ENCODE measurements at regions of chr17 and their contacts with region 1.

Region 1: DNA sequence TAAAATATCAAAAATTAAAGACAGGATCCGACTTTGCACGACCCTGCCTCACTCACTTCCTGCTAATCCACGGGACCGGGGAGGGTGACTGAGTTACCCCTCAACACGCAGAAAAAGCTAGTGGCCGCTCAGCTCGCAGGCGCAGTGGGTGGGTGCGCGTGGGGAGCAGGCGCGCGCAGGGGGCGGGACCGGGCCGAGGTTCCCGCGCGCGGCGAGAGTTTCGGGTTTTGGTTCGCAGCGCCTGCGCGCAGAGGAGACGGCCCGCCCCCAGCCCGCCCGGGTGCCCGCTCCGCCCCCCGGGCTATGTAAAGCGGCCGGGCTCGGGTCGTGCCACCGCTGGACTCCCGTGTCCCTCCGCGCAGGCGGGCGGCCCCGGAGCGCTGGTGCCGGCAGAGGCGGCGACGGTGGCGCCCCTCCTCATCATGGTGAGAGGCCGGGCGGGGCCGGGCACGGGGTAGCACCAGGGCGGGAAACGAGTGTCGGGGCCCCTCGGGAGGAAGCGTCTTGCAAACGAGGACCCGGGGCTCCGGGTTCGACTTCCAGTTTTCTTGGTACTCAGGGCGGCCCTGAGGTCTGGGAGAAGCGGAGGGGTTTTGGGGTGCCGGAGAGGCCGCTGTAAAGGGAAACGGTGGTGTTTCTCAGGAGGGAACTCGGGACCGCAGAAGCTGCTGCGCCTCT is at the start of gene CNP:
- DNase-seq: peak; percentile 77 to 95 (median 92)
- ATAC-seq: peak; percentile 88
- H3K4me3 ChIP-seq: peak within 1 kb of the TSS; percentile 75 to 89
- H3K4me3 Mint-ChIP-seq: peak within 1 kb of the TSS; percentile 83
- H3K27ac ChIP-seq: peak within 1 kb of the TSS; percentile 75 to 79
- H3K27ac Mint-ChIP-seq: peak within 1 kb of the TSS; percentile 94
- H3K4me1 ChIP-seq: peaks cover 33% of the 10 kb centered on the region
- H3K4me1 Mint-ChIP-seq: peaks cover 44% of the 10 kb centered on the region
- H3K27me3 ChIP-seq: no peaks in the 10 kb centered on the region
- H3K27me3 Mint-ChIP-seq: no peaks in the 10 kb centered on the region
- CTCF ChIP-seq: no peak
- total RNA-seq, gene CNP: 16.7 to 18.8 TPM

Region 2: DNA sequence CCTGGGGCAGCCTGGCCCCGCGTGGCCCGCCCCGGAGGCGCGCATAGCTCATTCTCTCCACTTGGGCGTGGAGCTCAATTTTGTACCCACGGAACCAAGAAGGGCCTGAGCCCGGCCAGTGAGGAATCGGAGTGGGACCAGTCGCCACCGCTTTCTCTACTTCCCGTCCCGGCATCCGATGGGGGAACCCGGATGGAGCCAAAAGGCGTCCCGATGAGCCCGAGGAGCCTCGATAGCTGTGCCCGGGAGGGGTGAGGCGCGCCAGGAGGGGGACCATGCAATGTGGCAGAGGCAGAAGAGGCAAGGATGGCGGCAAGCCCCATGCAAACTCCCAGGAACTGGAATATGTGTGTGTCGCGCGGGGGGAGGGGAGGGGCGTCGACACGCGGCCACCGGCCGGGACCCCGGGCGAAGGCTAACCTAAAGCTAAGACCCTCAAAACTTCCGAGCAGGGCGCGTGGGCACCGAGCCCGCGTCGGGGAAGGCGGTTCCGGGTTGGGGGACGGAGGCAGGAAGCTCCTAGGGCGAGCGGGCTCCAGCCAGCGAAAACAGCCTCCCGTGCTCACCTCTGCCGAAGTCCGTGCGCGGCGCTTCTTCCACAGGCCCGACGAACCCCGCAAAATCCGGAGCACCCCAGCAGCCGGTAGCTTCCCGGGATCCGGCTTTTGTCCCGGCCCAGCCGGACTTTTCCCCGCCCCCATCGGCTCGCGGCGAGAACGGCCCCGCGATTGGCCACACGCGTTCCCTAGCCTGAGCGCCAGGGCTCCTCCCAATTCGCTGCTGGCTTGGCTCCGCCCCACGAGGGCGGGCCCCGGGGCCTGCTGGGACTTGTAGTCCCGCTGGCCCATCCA is 48.1 kb before region 1 on chr17 and contains the start of gene ACLY:
- CTCF ChIA-PET with region 1: interaction called, 3 read pairs
- POLR2A ChIA-PET with region 1: interaction called, 3 read pairs
- intact Hi-C with region 1: loop called (anchors 1 kb)
- DNase-seq: peak; percentile 89 to 97 (median 95)
- ATAC-seq: peak; percentile 99
- H3K4me3 ChIP-seq: peak within 1 kb of the TSS; percentile 94 to 100
- H3K4me3 Mint-ChIP-seq: peak within 1 kb of the TSS; percentile 90
- H3K27ac ChIP-seq: peak within 1 kb of the TSS; percentile 82 to 86
- H3K27ac Mint-ChIP-seq: peak within 1 kb of the TSS; percentile 81
- H3K4me1 ChIP-seq: peaks cover 17% of the 10 kb centered on the region
- H3K4me1 Mint-ChIP-seq: peaks cover 32% of the 10 kb centered on the region
- H3K27me3 ChIP-seq: no peaks in the 10 kb centered on the region
- H3K27me3 Mint-ChIP-seq: no peaks in the 10 kb centered on the region
- CTCF ChIP-seq: no peak
- total RNA-seq, gene ACLY: 24.9 to 25.0 TPM

Region 3: GRCh38 chr17:41930009-41930832 is 36.4 kb before region 1 on chr17 and contains the start of gene ODAD4:
- CTCF ChIA-PET with region 1: interaction called, 3 read pairs
- POLR2A ChIA-PET with region 1: interaction called, 5 read pairs
- intact Hi-C with region 1: loop called (anchors 1 kb)
- DNase-seq: peak; percentile 93 to 99 (median 97)
- ATAC-seq: peak; percentile 99
- H3K4me3 ChIP-seq: peak within 1 kb of the TSS; percentile 61 to 73
- H3K4me3 Mint-ChIP-seq: peak within 1 kb of the TSS; percentile 94
- H3K27ac ChIP-seq: peak within 1 kb of the TSS; percentile 88 to 92
- H3K27ac Mint-ChIP-seq: peak within 1 kb of the TSS; percentile 93
- H3K4me1 ChIP-seq: peaks cover 12% of the 10 kb centered on the region
- H3K4me1 Mint-ChIP-seq: peaks cover 23% of the 10 kb centered on the region
- H3K27me3 ChIP-seq: no peaks in the 10 kb centered on the region
- H3K27me3 Mint-ChIP-seq: no peaks in the 10 kb centered on the region
- CTCF ChIP-seq: peak; percentile 62
- total RNA-seq, gene ODAD4: 1.1 to 1.6 TPM

Region 4: GRCh38 chr17:42120770-42121769 is 154.5 kb after region 1 on chr17 and contains the start of gene KAT2A:
- CTCF ChIA-PET with region 1: interaction called, 120 read pairs
- POLR2A ChIA-PET with region 1: interaction called, 3 read pairs
- intact Hi-C with region 1: loop called (anchors 1 kb)
- DNase-seq: peak; percentile 52 to 89 (median 75)
- ATAC-seq: peak; percentile 88
- H3K4me3 ChIP-seq: peak within 1 kb of the TSS; percentile 38 to 65
- H3K4me3 Mint-ChIP-seq: peak within 1 kb of the TSS; percentile 76
- H3K27ac ChIP-seq: no peak within 1 kb of the TSS
- H3K27ac Mint-ChIP-seq: no peak within 1 kb of the TSS
- H3K4me1 ChIP-seq: peaks cover 13% of the 10 kb centered on the region
- H3K4me1 Mint-ChIP-seq: peaks cover 22% of the 10 kb centered on the region
- H3K27me3 ChIP-seq: no peaks in the 10 kb centered on the region
- H3K27me3 Mint-ChIP-seq: no peaks in the 10 kb centered on the region
- CTCF ChIP-seq: no peak
- total RNA-seq, gene KAT2A: 39.3 to 42.5 TPM